CD4-positive, alpha-beta memory T cell (primary cell): ENCODE measurements at regions of chr1 and their contacts with region 1.

Region 1: DNA sequence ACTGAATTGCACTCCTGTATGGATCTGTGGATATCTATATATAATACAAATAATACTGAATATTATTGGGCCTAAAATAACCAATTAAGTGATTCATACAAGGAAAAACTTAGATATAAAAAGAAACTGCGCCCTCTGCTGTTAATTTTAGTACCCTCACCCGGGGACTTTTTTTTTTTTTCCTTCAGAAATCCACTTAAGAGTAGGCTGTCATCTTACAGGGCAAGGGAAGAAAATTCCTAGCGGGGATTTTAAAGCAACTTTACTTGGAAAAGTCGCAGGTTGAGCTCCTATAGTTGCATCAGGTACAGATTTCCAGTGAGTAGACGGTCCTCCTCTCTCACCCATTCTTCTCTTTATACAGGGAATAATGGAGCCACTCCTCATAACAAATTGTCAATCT is 1.3 kb downstream of the NTNG1 start:
- DNase-seq: peak in 1 of 5 donors; percentile 17
- H3K4me3 ChIP-seq: peak overlapping the region in 1 of 2 donors; percentile 52
- H3K4me3 Mint-ChIP-seq: peak overlapping the region; percentile 82 to 93 (median 88)
- H3K27ac ChIP-seq: no peak overlapping the region
- H3K27ac Mint-ChIP-seq: no peak overlapping the region
- H3K4me1 ChIP-seq: peaks cover 19% of the 10 kb centered on the region
- H3K4me1 Mint-ChIP-seq: peaks cover 11 to 26% (median 20%) of the 10 kb centered on the region in 4 donors
- H3K27me3 ChIP-seq: peaks cover 13% of the 10 kb centered on the region
- H3K27me3 Mint-ChIP-seq: peaks cover 35 to 37% of the 10 kb centered on the region in 2 donors

Region 2: DNA sequence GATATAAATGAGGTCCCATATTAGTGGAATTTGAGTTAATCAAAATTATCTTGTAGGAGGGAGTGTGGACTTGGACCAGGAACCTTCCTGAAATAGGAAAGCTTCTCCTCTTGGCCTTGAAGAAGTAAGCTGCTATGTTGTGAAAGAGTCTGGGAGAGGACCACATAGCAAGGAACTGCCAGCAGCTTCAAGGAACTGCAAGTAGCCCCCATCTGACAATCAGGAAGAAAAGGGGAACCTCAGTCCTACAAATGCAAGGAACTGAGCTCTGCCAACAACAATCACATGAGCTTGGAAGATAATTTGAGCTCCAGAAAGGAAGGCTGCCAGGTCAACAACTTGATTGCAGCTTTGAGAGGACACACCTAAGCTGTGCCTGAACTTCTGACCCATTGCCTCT is 93.9 kb before region 1 on chr1:
- CTCF ChIA-PET with region 1: interaction called, 3 read pairs
- POLR2A ChIA-PET with region 1: no interaction called
- intact Hi-C with region 1: loop called (anchors 1 kb)
- DNase-seq: no peak
- H3K4me3 ChIP-seq: no peak overlapping the region
- H3K4me3 Mint-ChIP-seq: no peak overlapping the region
- H3K27ac ChIP-seq: no peak overlapping the region
- H3K27ac Mint-ChIP-seq: no peak overlapping the region
- H3K4me1 ChIP-seq: no peaks in the 10 kb centered on the region
- H3K4me1 Mint-ChIP-seq: no peaks in the 10 kb centered on the region
- H3K27me3 ChIP-seq: no peaks in the 10 kb centered on the region
- H3K27me3 Mint-ChIP-seq: peaks cover 6 to 10% of the 10 kb centered on the region in 2 donors